Spleen (tissue), 13 donors: ENCODE measurements at regions of chr1 and their contacts with region 1.

Region 1: GRCh38 chr1:205523891-205524793 is 19.7 kb downstream of the CDK18 start:
- DNase-seq: peak; percentile 88
- H3K4me3 ChIP-seq: no peak overlapping the region
- H3K27ac ChIP-seq: no peak overlapping the region
- H3K4me1 ChIP-seq: peaks cover 0 to 24% (median 7%) of the 10 kb centered on the region in 6 donors
- H3K27me3 ChIP-seq: no peaks in the 10 kb centered on the region
- CTCF ChIP-seq: peak; percentile 57 to 84 (median 76)
- POLR2A ChIP-seq: no peak

Region 2: GRCh38 chr1:205273551-205273982 is 250.6 kb before region 1 on chr1:
- intact Hi-C with region 1: loop called (anchors 5 kb)
- DNase-seq: peak; percentile 95
- H3K4me3 ChIP-seq: peak overlapping the region in 1 of 8 donors; percentile 37
- H3K27ac ChIP-seq: peak overlapping the region in 3 of 8 donors; percentile 11 to 66 (median 33)
- H3K4me1 ChIP-seq: peaks cover 5 to 61% (median 28%) of the 10 kb centered on the region in 6 donors
- H3K27me3 ChIP-seq: no peaks in the 10 kb centered on the region
- CTCF ChIP-seq: peak; percentile 97 to 99 (median 99)
- POLR2A ChIP-seq: no peak

Region 3: DNA sequence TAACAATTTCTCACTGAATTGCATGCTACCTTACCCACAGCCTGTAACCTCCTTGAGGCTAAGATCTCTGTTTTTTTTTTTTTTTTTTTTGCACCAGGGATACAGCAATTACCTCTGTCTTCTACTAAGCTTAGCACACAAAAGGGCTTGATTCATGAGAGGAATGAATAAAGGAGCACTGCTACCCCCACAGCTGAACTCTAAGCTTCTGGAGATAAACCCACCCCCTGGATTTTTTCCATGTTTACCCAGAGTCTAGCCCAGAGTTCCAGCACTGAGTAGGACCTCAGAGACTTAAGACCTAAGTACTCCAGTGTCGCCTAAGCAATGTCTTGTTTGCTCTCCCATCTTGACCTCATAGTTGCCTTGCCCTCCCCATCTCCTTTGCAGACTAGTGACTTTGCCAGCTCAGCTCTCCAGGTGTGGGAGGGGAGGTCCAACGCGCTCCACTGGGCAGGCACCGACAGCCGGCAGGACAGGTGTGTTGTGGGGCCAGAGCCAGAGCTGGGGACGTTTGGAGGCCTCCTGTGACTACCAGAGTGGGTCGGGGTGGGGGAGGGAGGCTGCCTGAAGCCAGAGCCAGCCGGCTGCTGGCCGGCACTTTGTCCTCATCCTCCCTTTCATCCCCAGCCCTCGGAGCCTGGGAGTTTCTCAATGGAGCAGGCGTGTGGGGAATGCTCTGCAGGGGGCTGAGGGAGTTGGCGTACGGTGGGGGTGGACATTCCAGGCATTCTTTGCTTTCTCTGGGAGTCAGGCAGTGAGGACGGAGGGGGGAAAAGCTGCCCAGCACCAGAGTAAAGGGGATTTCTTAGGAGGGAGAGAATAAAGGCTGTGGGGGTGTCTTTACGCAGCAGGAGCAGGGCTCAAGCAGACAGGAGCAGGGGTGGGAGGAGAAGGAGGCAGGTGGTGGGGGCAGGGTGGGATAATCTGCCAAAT is 223.0 kb before region 1 on chr1:
- intact Hi-C with region 1: no loop called
- DNase-seq: no peak
- H3K4me3 ChIP-seq: no peak overlapping the region
- H3K27ac ChIP-seq: peak overlapping the region in 6 of 8 donors; percentile 53 to 67 (median 64)
- H3K4me1 ChIP-seq: peaks cover 4 to 77% (median 28%) of the 10 kb centered on the region in 6 donors
- H3K27me3 ChIP-seq: no peaks in the 10 kb centered on the region
- CTCF ChIP-seq: no peak
- POLR2A ChIP-seq: no peak

Region 4: DNA sequence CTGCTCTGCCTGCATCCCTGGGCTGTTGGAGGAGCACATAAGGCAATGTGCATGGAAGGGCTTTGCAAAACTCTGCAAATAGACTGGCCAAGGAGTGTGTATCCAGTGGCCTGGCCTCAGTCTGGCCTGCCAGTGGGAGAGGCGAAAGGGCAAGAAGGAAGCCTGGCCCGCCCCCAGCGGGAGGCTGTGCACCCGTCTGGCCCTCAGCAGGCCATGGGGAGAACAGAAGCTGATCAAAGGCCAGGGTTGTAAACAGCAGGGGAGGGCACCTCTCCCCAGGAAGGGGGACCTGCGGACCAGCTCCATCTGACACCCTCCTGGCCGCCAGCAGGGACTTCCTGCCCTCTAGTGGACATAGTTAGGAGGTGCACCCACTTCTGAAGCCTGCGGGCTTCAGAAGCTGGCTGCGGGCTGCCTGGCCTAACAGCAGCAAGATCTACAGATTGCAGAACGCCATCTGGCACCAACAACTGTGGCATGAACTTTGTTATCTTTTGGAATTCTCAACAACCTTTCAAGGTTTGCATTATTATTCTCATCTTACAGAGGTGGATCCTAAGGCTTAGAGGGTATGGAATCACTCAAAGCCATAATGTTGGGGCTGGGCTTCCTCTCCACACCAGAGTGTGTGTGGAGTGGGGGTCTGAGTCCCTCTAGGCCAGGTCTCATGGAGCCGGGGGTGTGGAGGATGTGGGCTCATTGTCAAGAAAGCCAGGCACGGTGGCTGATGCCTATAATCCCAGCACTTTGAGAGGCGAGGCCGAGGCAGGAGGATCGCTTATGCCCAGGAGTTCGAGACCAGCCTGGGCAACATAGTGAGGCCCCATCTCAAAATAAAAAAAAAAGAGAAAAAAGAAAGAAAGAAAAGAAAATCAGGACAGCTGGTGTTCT is 38.6 kb before region 1 on chr1:
- intact Hi-C with region 1: loop called (anchors 2 kb)
- DNase-seq: peak; percentile 88
- H3K4me3 ChIP-seq: no peak overlapping the region
- H3K27ac ChIP-seq: no peak overlapping the region
- H3K4me1 ChIP-seq: peaks cover 2 to 27% (median 21%) of the 10 kb centered on the region in 6 donors
- H3K27me3 ChIP-seq: peaks cover 0 to 75% (median 16%) of the 10 kb centered on the region in 7 donors
- CTCF ChIP-seq: peak; percentile 82 to 99 (median 96)
- POLR2A ChIP-seq: no peak